ENCODE measurements at regions of chr3 and their contacts with region 1.

Region 1: GRCh38 chr3:8970971-8971589 is 7.8 kb upstream of the RAD18 start:
- DNase-seq: peak; percentile 78
- H3K4me3 Mint-ChIP-seq: no peak overlapping the region
- H3K27ac Mint-ChIP-seq: no peak overlapping the region
- H3K4me1 Mint-ChIP-seq: peaks cover 5% of the 10 kb centered on the region
- H3K27me3 Mint-ChIP-seq: peaks cover 20% of the 10 kb centered on the region

Region 2: GRCh38 chr3:8987645-8988383 is 16.7 kb after region 1 on chr3:
- CTCF ChIA-PET with region 1: interaction called, 12 read pairs
- POLR2A ChIA-PET with region 1: no interaction called
- DNase-seq: peak; percentile 72
- H3K4me3 Mint-ChIP-seq: no peak overlapping the region
- H3K27ac Mint-ChIP-seq: no peak overlapping the region
- H3K4me1 Mint-ChIP-seq: peaks cover 4% of the 10 kb centered on the region
- H3K27me3 Mint-ChIP-seq: no peaks in the 10 kb centered on the region

Region 3: GRCh38 chr3:9302425-9303181 is 331.5 kb after region 1 on chr3:
- CTCF ChIA-PET with region 1: interaction called, 11 read pairs
- POLR2A ChIA-PET with region 1: no interaction called
- DNase-seq: peak; percentile 77
- H3K4me3 Mint-ChIP-seq: no peak overlapping the region
- H3K27ac Mint-ChIP-seq: no peak overlapping the region
- H3K4me1 Mint-ChIP-seq: peaks cover 13% of the 10 kb centered on the region
- H3K27me3 Mint-ChIP-seq: peaks cover 3% of the 10 kb centered on the region